Activated naive CD4-positive, alpha-beta T cell treated with anti-CD3 and anti-CD28 coated beads for 36 hours (primary cell): ENCODE measurements at regions of chr7 and their contacts with region 1.

Region 1: DNA sequence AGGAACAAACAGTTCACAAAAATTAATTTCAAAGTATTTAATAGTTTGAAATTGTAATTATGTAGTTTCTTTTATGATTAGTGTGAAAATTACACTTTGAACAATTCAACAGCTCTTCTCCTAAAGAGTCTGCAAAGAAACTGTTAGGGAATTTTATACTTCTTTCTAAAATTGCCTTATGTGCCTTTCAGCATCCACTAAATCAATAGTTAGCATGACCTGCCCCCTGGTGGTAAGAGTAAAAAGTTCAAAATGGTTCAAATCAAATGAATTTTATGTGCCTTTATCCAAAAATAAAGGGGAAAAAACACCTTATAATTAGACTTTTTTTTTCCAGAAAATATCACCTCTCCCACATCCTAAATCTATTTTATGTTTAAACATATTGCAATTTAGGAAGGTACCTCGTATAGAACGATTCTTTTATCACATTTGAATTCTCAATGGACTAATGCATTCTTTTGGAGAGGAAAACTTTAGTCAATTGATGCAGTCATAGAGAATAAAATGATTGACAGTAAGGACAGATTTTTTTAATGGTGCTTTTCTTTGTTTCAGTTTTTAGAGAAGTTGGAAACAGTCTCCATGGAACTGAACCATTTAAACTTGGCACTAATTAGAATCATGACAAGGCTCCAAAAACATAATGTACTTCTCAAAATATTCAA is 163.7 kb downstream of the SEMA3D start:
- DNase-seq: peak; percentile 29
- H3K4me3 Mint-ChIP-seq: no peak overlapping the region
- H3K27ac Mint-ChIP-seq: no peak overlapping the region
- H3K4me1 Mint-ChIP-seq: no peaks in the 10 kb centered on the region
- H3K27me3 Mint-ChIP-seq: peaks cover 3% of the 10 kb centered on the region

Region 2: DNA sequence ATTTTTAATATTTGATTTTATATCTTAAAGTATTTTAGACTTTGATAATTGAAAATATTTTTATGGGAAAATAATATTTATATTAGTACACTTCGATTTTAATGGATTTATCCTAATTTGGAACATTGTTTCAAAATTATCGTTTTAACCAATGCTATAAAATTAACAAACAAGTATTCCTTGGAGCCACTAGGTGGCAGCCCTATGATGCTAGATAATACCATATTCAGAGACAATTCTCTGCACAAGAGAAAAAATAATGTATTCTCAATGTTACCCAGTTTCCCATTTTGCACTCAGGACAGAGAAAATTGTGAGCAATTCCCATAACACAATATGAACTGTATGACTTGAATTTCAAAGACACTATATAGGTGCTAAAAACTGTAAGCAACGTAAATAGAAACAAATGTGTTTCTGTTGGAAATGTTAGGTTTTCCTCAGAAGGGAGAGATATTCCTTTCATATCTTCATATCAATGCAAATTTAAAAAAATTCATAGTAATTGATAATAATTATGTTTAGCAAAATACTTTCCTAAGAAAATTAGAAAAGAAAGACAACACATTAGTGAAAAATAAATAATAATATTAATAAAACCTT is 1612.1 kb before region 1 on chr7:
- CTCF ChIA-PET with region 1: no interaction called
- intact Hi-C with region 1: loop called (anchors 5 kb)
- DNase-seq: peak; percentile 9
- H3K4me3 Mint-ChIP-seq: no peak overlapping the region
- H3K27ac Mint-ChIP-seq: no peak overlapping the region
- H3K4me1 Mint-ChIP-seq: no peaks in the 10 kb centered on the region
- H3K27me3 Mint-ChIP-seq: no peaks in the 10 kb centered on the region

Region 3: DNA sequence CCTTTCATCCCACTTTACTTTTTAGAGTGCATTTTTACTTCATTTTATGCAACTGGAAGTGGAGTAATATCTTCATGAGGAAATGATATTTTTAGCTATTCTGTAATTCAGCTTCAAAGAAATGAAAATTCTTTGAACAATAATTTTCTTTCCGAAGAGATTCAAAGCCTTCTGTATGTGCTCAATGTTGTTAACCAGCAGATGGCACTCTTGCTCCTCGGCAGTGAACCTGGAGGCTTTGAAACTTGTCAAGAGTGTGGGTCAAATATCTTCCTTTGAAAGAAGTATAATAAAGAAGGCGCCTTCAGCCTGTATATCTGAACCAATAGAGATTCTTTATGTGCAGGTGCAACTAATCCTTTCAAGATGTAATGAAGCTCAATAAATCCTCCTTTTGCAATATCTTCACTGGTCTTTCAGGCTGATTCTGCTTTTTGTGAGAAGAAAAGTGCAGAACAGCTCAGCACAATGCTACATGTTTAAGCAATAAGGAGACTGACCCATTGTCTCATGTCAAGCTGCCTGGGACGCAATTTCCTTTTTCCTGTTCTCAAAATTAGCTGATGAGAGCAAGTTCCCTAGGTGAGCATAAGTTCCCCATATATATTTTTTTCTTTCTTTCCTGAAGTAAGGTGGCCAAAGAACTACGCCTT is 1087.0 kb before region 1 on chr7:
- CTCF ChIA-PET with region 1: interaction called, 12 read pairs
- intact Hi-C with region 1: loop called (anchors 1 kb)
- DNase-seq: peak; percentile 74
- H3K4me3 Mint-ChIP-seq: no peak overlapping the region
- H3K27ac Mint-ChIP-seq: no peak overlapping the region
- H3K4me1 Mint-ChIP-seq: peaks cover 2% of the 10 kb centered on the region
- H3K27me3 Mint-ChIP-seq: peaks cover 2% of the 10 kb centered on the region

Region 4: DNA sequence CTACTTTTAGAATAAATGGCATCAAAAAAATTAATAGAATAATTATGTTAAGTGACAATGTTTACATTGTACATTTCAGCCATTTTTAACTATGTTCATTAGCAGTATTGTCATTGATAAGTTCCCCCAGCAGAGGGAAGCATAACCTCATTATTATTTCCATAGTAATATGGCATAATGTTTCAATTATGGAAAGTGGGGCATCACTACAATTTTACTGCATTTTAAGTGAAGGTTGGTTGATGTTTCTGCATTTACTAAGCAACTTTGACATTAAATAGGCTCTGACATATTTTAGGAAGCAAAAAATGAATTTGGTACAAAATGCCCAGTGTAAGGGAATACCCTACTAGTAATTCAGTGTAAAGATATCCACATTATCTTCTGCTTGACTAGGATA is 1046.9 kb before region 1 on chr7:
- CTCF ChIA-PET with region 1: interaction called, 5 read pairs
- intact Hi-C with region 1: loop called (anchors 1 kb)
- DNase-seq: no peak
- H3K4me3 Mint-ChIP-seq: no peak overlapping the region
- H3K27ac Mint-ChIP-seq: no peak overlapping the region
- H3K4me1 Mint-ChIP-seq: no peaks in the 10 kb centered on the region
- H3K27me3 Mint-ChIP-seq: no peaks in the 10 kb centered on the region

Region 5: DNA sequence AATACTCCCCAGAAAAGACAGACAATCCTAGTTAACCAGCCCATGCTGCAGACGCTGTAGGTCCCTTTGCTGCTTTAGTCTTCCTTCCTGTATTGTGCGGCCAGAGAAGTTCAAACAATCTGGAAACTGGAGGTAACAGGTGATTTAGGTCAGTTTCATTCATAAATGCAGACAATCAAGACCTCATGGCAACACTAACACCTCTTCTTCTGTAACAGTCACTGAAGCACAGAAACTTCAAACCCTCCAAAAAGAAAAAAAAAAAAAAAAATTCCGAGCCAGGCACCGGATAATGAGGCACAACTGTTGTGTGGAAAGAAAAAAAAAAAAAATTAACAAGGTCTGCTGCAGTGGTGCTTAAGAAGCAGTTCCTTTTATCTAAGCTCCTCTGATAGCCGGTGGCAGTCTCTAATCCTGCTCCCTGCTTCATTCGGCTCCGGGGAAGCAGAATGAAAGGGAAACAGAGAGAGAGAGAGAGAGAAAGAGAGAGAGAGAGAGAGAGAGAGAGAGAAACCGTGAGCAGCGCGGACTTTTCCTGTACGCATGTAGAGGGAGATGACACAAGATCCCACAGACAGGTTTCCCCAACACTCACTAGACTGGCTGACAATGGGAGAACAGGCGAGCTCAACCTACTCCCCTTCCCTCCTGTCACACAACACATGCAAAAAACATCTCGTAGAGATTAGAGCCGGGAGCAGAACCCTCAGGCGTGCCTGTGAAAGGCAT is 828.5 kb before region 1 on chr7 and contains the start of gene SEMA3A:
- CTCF ChIA-PET with region 1: no interaction called
- intact Hi-C with region 1: loop called (anchors 5 kb)
- DNase-seq: peak; percentile 56
- H3K4me3 Mint-ChIP-seq: peak within 1 kb of the TSS; percentile 90
- H3K27ac Mint-ChIP-seq: peak within 1 kb of the TSS; percentile 79
- H3K4me1 Mint-ChIP-seq: peaks cover 34% of the 10 kb centered on the region
- H3K27me3 Mint-ChIP-seq: peaks cover 2% of the 10 kb centered on the region
- total RNA-seq, gene SEMA3A: 2.7 to 3.0 TPM

Region 6: DNA sequence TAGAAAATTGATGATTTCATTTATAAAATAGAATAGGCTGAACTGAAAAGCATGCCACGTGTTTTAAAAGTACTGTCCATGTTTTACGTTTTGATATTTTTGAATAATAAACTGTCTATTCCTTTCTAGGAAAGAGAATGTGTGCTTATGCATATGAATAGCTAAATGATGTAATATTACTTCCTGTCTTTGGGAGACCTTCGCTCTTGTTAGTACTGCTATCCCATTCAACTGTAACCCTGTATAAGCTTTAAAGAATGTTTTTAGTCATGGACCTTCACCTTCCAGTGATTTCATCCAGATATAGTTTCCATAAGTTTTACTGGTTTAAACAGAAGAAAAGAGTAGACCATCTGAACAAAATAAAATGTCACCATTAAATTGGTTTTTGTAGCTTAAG is 554.1 kb before region 1 on chr7:
- CTCF ChIA-PET with region 1: no interaction called
- intact Hi-C with region 1: loop called (anchors 10 kb)
- DNase-seq: no peak
- H3K4me3 Mint-ChIP-seq: no peak overlapping the region
- H3K27ac Mint-ChIP-seq: no peak overlapping the region
- H3K4me1 Mint-ChIP-seq: no peaks in the 10 kb centered on the region
- H3K27me3 Mint-ChIP-seq: peaks cover 2% of the 10 kb centered on the region

Region 7: DNA sequence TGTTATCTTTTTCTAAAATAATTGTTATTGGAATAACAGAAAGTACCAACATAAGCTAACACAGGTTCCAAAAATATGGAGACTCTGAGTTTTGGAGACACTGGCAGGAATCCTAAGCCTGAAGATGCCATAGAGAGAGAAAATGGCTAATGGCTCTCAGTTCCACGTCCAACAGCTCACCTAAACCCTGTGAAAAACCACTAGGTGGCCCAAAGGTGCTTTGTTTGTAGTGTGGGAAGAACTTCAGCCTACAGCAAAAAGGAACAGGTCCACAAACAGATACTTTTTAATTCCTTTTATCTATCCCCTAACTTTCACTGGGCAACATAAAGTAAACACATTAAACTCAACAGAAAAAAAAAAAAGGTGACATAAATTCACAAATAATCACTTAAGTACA is 108.6 kb before region 1 on chr7:
- CTCF ChIA-PET with region 1: interaction called, 5 read pairs
- intact Hi-C with region 1: loop called (anchors 5 kb)
- DNase-seq: no peak
- H3K4me3 Mint-ChIP-seq: no peak overlapping the region
- H3K27ac Mint-ChIP-seq: no peak overlapping the region
- H3K4me1 Mint-ChIP-seq: no peaks in the 10 kb centered on the region
- H3K27me3 Mint-ChIP-seq: peaks cover under 1% of the 10 kb centered on the region